Right cardiac atrium (tissue), 5 donors: ENCODE measurements at regions of chr4 and their contacts with region 1.

Region 1: GRCh38 chr4:112327965-112328733 is 31.0 kb downstream of the ALPK1 start:
- DNase-seq: no peak
- ATAC-seq: no peak
- H3K4me3 ChIP-seq: no peak overlapping the region
- H3K27ac ChIP-seq: no peak overlapping the region
- H3K4me1 ChIP-seq: no peaks in the 10 kb centered on the region
- H3K27me3 ChIP-seq: no peaks in the 10 kb centered on the region

Region 2: GRCh38 chr4:112515304-112516067 is 187.3 kb after region 1 on chr4:
- intact Hi-C with region 1: loop called (anchors 5 to 10 kb)
- DNase-seq: peak in 2 of 3 donors; percentile 55 to 63
- ATAC-seq: peak; percentile 54 to 73
- H3K4me3 ChIP-seq: peak overlapping the region; percentile 66
- H3K27ac ChIP-seq: no peak overlapping the region
- H3K4me1 ChIP-seq: peaks cover 9% of the 10 kb centered on the region
- H3K27me3 ChIP-seq: peaks cover 7% of the 10 kb centered on the region

Region 3: GRCh38 chr4:112523764-112524505 is 195.8 kb after region 1 on chr4:
- intact Hi-C with region 1: loop called (anchors 5 to 10 kb)
- DNase-seq: peak; percentile 39 to 82 (median 79)
- ATAC-seq: peak; percentile 85
- H3K4me3 ChIP-seq: peak overlapping the region; percentile 49
- H3K27ac ChIP-seq: no peak overlapping the region
- H3K4me1 ChIP-seq: no peaks in the 10 kb centered on the region
- H3K27me3 ChIP-seq: no peaks in the 10 kb centered on the region

Region 4: GRCh38 chr4:112604589-112604988 is 276.4 kb after region 1 on chr4:
- intact Hi-C with region 1: loop called in 3 of 4 experiments (anchors 2 to 5 kb)
- DNase-seq: no peak
- ATAC-seq: peak; percentile 71 to 72
- H3K4me3 ChIP-seq: no peak overlapping the region
- H3K27ac ChIP-seq: no peak overlapping the region
- H3K4me1 ChIP-seq: no peaks in the 10 kb centered on the region
- H3K27me3 ChIP-seq: no peaks in the 10 kb centered on the region